ENCODE measurements at regions of chrX and their contacts with region 1.

Region 1: DNA sequence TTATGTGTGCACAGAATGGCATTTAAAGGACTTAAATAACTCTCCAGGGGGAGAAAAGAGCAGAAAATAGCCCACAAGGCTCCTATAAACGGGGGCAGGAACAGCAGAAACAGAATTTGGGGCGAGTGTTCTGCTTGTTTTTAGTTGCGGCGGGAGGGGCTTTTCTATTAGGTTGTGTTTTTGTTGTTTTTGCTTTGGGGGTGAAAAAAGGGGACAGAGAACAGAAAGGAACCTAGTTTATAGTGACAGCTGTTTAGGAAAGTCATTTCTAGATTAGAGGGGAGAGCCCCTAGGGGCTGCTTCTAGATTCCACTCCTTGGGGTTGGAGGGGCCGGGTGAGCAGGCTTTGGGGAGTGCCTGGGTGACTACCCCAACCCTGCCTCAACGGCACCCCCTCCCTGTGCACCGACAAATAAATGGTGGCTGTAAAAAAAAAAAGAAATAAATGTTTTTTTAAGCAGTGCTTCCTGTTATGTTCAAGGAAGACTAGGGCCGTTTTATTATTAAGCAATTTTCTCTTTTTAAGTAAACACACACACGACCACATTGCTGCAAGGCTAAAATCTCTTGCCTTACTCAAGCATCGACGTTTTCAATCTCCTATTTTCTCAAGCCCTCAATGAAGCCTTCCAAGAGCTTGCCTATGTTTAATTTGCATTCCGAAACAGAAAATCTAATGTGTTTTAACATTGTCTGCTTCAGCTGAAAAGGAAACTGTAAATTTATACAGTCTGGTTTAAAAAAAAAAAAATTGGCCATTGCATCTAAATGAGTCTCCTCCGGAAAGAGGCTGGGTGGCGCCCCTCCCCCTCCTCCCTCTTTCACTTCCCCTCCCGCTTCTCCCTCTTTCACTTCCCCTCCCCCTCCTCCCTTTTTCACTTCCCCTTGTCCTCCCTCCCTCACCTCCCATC is 123.3 kb upstream of the TBL1X start:
- DNase-seq: peak in 6 of 9 experiments; percentile 55 to 84 (median 74)
- ATAC-seq: peak; percentile 50
- H3K4me3 ChIP-seq: peak overlapping the region; percentile 35 to 46
- H3K4me3 Mint-ChIP-seq: peak overlapping the region; percentile 85
- H3K27ac ChIP-seq: peak overlapping the region; percentile 81
- H3K27ac Mint-ChIP-seq: peak overlapping the region; percentile 98
- H3K4me1 ChIP-seq: peaks cover 24% of the 10 kb centered on the region
- H3K4me1 Mint-ChIP-seq: peaks cover 37% of the 10 kb centered on the region
- H3K27me3 ChIP-seq: no peaks in the 10 kb centered on the region
- H3K27me3 Mint-ChIP-seq: no peaks in the 10 kb centered on the region
- CTCF ChIP-seq: no peak

Region 2: DNA sequence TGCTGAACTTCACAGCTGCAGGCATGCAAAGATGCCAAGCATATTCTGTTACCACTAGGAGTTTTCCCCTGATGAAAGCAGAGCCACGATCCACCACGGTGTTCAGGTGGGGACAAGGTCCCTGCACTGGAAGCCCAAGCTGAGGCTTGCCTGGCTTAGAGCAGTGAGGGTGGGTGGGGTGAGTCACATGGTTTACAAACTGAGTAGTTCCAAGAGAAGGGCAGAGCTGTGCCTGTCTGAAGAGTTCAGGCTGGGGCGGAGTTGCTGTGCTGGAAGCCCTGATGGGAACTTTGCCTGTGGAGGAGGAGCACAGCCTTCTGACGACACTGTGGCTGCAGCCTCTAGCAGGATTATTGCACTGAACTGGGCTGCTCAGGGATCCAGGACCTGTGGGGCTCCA is 353.1 kb before region 1 on chrX:
- CTCF ChIA-PET with region 1: no interaction called
- POLR2A ChIA-PET with region 1: interaction called, 3 read pairs
- intact Hi-C with region 1: loop called in 1 of 2 experiments (anchors 5 kb)
- DNase-seq: peak in 4 of 9 experiments; percentile 6 to 42 (median 24)
- ATAC-seq: peak; percentile 7
- H3K4me3 ChIP-seq: no peak overlapping the region
- H3K4me3 Mint-ChIP-seq: no peak overlapping the region
- H3K27ac ChIP-seq: peak overlapping the region in 1 of 2 experiments; percentile 14
- H3K27ac Mint-ChIP-seq: peak overlapping the region; percentile 96
- H3K4me1 ChIP-seq: peaks cover 26% of the 10 kb centered on the region
- H3K4me1 Mint-ChIP-seq: peaks cover 29% of the 10 kb centered on the region
- H3K27me3 ChIP-seq: no peaks in the 10 kb centered on the region
- H3K27me3 Mint-ChIP-seq: no peaks in the 10 kb centered on the region
- CTCF ChIP-seq: no peak

Region 3: DNA sequence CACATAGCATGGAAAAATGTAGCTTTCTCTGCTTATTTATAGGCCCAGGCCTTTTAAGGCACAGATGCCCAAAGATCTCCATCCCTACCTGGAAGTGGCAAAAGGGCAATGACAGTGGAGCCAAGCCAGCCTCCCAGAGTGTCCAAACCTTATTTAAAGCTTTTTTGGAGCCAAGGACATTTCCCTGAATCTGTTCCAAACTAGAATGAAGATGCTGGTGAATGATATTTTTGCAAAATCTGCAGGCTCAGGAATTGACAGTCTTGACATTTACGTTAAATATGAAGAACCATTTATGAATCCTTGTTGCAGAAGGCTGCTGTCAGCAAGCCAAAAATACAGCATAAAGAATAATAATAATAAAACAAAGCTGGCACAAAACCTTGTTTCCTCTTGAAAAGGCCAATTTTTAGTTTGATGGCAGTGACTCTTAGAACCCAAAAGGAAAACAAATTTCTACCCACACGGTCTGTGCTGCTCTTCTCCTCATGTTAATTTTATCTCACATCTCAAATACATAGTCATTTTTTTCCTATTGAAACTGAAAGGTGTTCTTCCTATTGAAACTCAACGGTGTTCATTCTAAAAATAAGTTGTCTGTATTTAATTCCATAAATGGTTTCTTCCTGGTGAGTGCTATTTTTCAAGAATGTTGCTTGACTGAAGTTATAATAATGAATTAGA is 83.0 kb before region 1 on chrX:
- CTCF ChIA-PET with region 1: no interaction called
- POLR2A ChIA-PET with region 1: no interaction called
- intact Hi-C with region 1: no loop called
- DNase-seq: no peak
- ATAC-seq: no peak
- H3K4me3 ChIP-seq: no peak overlapping the region
- H3K4me3 Mint-ChIP-seq: no peak overlapping the region
- H3K27ac ChIP-seq: no peak overlapping the region
- H3K27ac Mint-ChIP-seq: no peak overlapping the region
- H3K4me1 ChIP-seq: no peaks in the 10 kb centered on the region
- H3K4me1 Mint-ChIP-seq: no peaks in the 10 kb centered on the region
- H3K27me3 ChIP-seq: no peaks in the 10 kb centered on the region
- H3K27me3 Mint-ChIP-seq: no peaks in the 10 kb centered on the region
- CTCF ChIP-seq: no peak

Region 4: GRCh38 chrX:9312922-9313867 is 28.4 kb before region 1 on chrX:
- CTCF ChIA-PET with region 1: interaction called, 11 read pairs
- POLR2A ChIA-PET with region 1: interaction called, 4 read pairs
- intact Hi-C with region 1: loop called (anchors 1 to 2 kb)
- DNase-seq: peak; percentile 43 to 87 (median 72)
- ATAC-seq: peak; percentile 88
- H3K4me3 ChIP-seq: no peak overlapping the region
- H3K4me3 Mint-ChIP-seq: no peak overlapping the region
- H3K27ac ChIP-seq: no peak overlapping the region
- H3K27ac Mint-ChIP-seq: no peak overlapping the region
- H3K4me1 ChIP-seq: no peaks in the 10 kb centered on the region
- H3K4me1 Mint-ChIP-seq: peaks cover 12% of the 10 kb centered on the region
- H3K27me3 ChIP-seq: no peaks in the 10 kb centered on the region
- H3K27me3 Mint-ChIP-seq: no peaks in the 10 kb centered on the region
- CTCF ChIP-seq: peak; percentile 57

Region 5: DNA sequence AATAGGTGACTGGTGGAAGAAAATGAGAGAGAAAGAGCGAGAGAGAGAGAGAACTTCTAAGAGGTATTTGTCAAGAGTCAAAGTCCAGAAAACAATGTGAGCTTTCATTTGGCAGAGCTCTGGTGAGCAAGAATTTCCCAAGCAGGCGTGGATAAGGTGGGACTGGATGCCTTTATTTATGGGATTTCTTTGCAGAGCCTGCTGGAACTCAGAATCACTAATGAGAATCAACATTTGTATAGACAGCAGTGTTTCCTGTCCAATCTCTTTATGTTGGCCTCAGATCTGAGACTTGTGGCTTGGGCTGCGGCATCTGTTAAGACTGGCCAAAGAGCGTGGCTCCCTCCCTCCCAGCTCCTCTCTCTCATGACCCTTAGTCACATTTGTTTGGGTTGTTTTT is 55.4 kb after region 1 on chrX:
- CTCF ChIA-PET with region 1: no interaction called
- POLR2A ChIA-PET with region 1: no interaction called
- intact Hi-C with region 1: loop called in 1 of 2 experiments (anchors 2 kb)
- DNase-seq: no peak
- ATAC-seq: no peak
- H3K4me3 ChIP-seq: no peak overlapping the region
- H3K4me3 Mint-ChIP-seq: no peak overlapping the region
- H3K27ac ChIP-seq: no peak overlapping the region
- H3K27ac Mint-ChIP-seq: no peak overlapping the region
- H3K4me1 ChIP-seq: no peaks in the 10 kb centered on the region
- H3K4me1 Mint-ChIP-seq: peaks cover 4% of the 10 kb centered on the region
- H3K27me3 ChIP-seq: no peaks in the 10 kb centered on the region
- H3K27me3 Mint-ChIP-seq: no peaks in the 10 kb centered on the region
- CTCF ChIP-seq: no peak